Panc1 (cell line): ENCODE measurements at regions of chr2 and their contacts with region 1.

Region 1: DNA sequence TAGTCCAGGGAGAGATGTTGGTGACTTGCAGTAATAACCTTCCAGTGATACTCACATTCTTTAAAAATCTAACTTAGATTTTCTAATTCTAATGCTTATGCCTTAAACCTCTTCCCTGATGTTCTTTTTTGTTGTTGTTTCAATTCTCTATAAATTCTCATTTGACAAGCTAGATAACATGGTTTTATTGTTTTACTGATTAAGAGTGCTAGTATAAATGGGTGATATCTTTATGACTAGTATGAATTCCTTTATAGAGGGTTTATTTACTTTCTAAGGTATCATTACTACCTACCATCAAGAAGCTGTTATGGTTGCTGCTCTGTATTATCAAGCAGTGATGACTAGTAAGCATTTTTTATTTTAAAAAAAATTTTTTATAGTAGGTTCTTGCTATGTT is 35.0 kb downstream of the ACVR2A start:
- DNase-seq: no peak
- ATAC-seq: no peak
- H3K4me3 ChIP-seq: no peak overlapping the region
- H3K27ac ChIP-seq: no peak overlapping the region
- H3K4me1 ChIP-seq: no peaks in the 10 kb centered on the region
- H3K27me3 ChIP-seq: no peaks in the 10 kb centered on the region
- CTCF ChIP-seq: no peak

Region 2: GRCh38 chr2:147860009-147860408 is 19.8 kb before region 1 on chr2:
- CTCF ChIA-PET with region 1: interaction called, 13 read pairs
- POLR2A ChIA-PET with region 1: no interaction called
- in situ Hi-C with region 1: no loop called
- intact Hi-C with region 1: no loop called
- DNase-seq: no peak
- ATAC-seq: no peak
- H3K4me3 ChIP-seq: no peak overlapping the region
- H3K27ac ChIP-seq: no peak overlapping the region
- H3K4me1 ChIP-seq: no peaks in the 10 kb centered on the region
- H3K27me3 ChIP-seq: no peaks in the 10 kb centered on the region
- CTCF ChIP-seq: no peak